H1 (cell line): ENCODE measurements at regions of chr7 and their contacts with region 1.

Region 1: DNA sequence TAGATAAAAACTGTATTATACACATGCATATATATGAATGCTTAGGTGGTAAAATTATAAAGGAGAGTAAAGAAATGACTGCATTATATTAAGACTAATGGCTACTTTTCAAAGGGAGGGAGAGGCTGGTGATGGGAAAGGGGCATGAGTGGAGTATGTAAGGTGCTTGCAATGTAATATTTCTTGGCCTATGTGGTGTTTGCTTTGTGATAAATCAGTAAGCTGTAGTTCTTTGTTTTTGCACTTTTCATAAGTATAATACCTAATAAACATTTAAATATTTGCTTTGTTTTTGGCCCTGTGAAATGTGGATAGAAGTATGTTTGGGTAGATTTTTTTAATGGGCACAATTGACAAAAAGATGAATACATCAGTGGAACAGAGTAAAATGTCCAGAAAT is 25.9 kb downstream of the AGBL3 start:
- DNase-seq: no peak
- H3K4me3 ChIP-seq: no peak overlapping the region
- H3K27ac ChIP-seq: no peak overlapping the region
- H3K4me1 ChIP-seq: no peaks in the 10 kb centered on the region
- H3K27me3 ChIP-seq: no peaks in the 10 kb centered on the region
- CTCF ChIP-seq: no peak
- EP300 ChIP-seq: no peak
- POLR2A ChIP-seq: no peak
- RAD21 ChIP-seq: no peak

Region 2: GRCh38 chr7:135023622-135024021 is 11.4 kb after region 1 on chr7:
- CTCF ChIA-PET with region 1: interaction called, 10 read pairs
- POLR2A ChIA-PET with region 1: no interaction called
- DNase-seq: no peak
- H3K4me3 ChIP-seq: no peak overlapping the region
- H3K27ac ChIP-seq: no peak overlapping the region
- H3K4me1 ChIP-seq: no peaks in the 10 kb centered on the region
- H3K27me3 ChIP-seq: no peaks in the 10 kb centered on the region
- CTCF ChIP-seq: no peak
- EP300 ChIP-seq: no peak
- POLR2A ChIP-seq: no peak
- RAD21 ChIP-seq: no peak